Heart left ventricle (tissue), 16 donors: ENCODE measurements at regions of chr2 and their contacts with region 1.

Region 1: DNA sequence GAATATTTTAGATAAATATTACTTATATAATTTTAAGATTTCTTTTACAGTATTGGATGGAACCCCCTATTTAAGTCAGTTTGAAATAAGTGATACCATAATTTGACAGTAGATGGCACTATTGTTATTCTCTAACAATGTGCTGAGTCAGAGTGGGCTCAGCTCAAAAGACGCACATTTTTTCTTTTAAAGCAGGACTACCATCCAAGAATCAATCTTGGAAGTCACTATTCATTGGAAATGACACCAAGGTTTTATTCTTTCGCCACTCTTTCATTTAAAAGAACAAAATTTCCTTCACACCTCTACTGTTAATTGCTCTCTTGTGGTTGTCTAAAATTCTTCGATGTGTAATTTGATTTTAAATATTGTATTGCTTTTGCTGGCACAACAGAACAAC is 32.6 kb upstream of the SPAG16 start:
- DNase-seq: no peak
- ATAC-seq: peak in 3 of 4 donors; percentile 50 to 77 (median 59)
- H3K4me3 ChIP-seq: no peak overlapping the region
- H3K27ac ChIP-seq: no peak overlapping the region
- H3K4me1 ChIP-seq: no peaks in the 10 kb centered on the region
- H3K27me3 ChIP-seq: no peaks in the 10 kb centered on the region
- CTCF ChIP-seq: peak; percentile 57 to 81 (median 69)
- POLR2A ChIP-seq: no peak

Region 2: DNA sequence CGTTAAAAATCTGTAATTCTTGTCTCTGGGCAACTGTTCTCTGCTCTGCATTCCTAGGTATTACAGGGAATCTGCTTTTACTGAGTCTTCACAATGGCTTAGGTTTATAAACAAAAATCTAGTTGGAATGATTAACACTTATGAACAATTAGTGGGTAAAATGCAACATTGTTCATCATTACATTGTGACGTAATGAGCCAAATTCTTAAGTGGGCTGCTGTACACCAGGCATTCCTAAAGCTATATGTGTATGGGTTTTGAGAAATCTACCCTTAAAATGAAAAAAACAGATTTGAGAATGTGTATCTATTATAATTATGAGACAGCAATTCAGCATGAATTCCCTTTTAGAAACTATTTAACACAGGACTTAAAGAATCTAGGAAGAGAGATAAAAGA is 671.5 kb before region 1 on chr2:
- intact Hi-C with region 1: no loop called
- DNase-seq: no peak
- ATAC-seq: no peak
- H3K4me3 ChIP-seq: no peak overlapping the region
- H3K27ac ChIP-seq: no peak overlapping the region
- H3K4me1 ChIP-seq: no peaks in the 10 kb centered on the region
- H3K27me3 ChIP-seq: no peaks in the 10 kb centered on the region
- CTCF ChIP-seq: no peak
- POLR2A ChIP-seq: no peak

Region 3: GRCh38 chr2:213284105-213285090 is 32.8 kb after region 1 on chr2 and contains the start of gene SPAG16:
- intact Hi-C with region 1: loop called in 1 of 10 experiments (anchors 2 kb)
- DNase-seq: peak; percentile 94 to 97 (median 97)
- ATAC-seq: peak; percentile 99 to 100 (median 100)
- H3K4me3 ChIP-seq: peak within 1 kb of the TSS; percentile 59 to 93 (median 71)
- H3K27ac ChIP-seq: peak within 1 kb of the TSS in 10 of 12 donors; percentile 22 to 77 (median 42)
- H3K4me1 ChIP-seq: peaks cover 0 to 18% (median 7%) of the 10 kb centered on the region in 12 donors
- H3K27me3 ChIP-seq: no peaks in the 10 kb centered on the region
- CTCF ChIP-seq: peak in 1 of 12 donors; percentile 7
- POLR2A ChIP-seq: no peak
- total RNA-seq, gene SPAG16: 12.7 to 26.1 (median 18.7) TPM

Region 4: DNA sequence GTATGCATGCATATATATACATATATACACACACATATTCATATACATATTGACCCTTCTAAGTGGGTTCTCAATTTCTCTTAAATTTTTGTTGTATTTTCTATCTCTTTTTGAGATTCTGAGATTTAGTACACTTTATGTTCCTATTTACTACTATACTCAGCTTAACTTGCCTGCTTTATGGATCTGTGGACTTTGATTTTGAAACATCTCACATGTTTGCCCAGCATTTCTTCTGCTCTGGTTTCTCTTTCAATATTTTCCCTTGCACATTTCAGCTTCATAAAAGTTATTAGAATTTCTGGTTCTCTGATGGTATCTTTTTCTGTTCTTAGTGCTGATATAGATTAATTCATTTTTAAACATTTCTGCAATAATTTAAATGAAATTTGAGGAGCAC is 413.2 kb after region 1 on chr2:
- intact Hi-C with region 1: loop called in 1 of 10 experiments (anchors 5 kb)
- DNase-seq: no peak
- ATAC-seq: no peak
- H3K4me3 ChIP-seq: no peak overlapping the region
- H3K27ac ChIP-seq: no peak overlapping the region
- H3K4me1 ChIP-seq: no peaks in the 10 kb centered on the region
- H3K27me3 ChIP-seq: no peaks in the 10 kb centered on the region
- CTCF ChIP-seq: no peak
- POLR2A ChIP-seq: no peak

Region 5: GRCh38 chr2:213934560-213934959 is 682.9 kb after region 1 on chr2:
- intact Hi-C with region 1: loop called in 3 of 10 experiments (anchors 5 to 10 kb)
- DNase-seq: no peak
- ATAC-seq: no peak
- H3K4me3 ChIP-seq: no peak overlapping the region
- H3K27ac ChIP-seq: no peak overlapping the region
- H3K4me1 ChIP-seq: no peaks in the 10 kb centered on the region
- H3K27me3 ChIP-seq: no peaks in the 10 kb centered on the region
- CTCF ChIP-seq: peak in 10 of 12 donors; percentile 8 to 42 (median 36)
- POLR2A ChIP-seq: no peak

Region 6: GRCh38 chr2:215002500-215002899 is 1750.9 kb after region 1 on chr2:
- intact Hi-C with region 1: loop called in 1 of 10 experiments (anchors 10 kb)
- DNase-seq: no peak
- ATAC-seq: no peak
- H3K4me3 ChIP-seq: no peak overlapping the region
- H3K27ac ChIP-seq: no peak overlapping the region
- H3K4me1 ChIP-seq: no peaks in the 10 kb centered on the region
- H3K27me3 ChIP-seq: no peaks in the 10 kb centered on the region
- CTCF ChIP-seq: peak in 11 of 12 donors; percentile 24 to 61 (median 48)
- POLR2A ChIP-seq: no peak